WTC11 (cell line): ENCODE measurements at regions of chr20 and their contacts with region 1.

Region 1: DNA sequence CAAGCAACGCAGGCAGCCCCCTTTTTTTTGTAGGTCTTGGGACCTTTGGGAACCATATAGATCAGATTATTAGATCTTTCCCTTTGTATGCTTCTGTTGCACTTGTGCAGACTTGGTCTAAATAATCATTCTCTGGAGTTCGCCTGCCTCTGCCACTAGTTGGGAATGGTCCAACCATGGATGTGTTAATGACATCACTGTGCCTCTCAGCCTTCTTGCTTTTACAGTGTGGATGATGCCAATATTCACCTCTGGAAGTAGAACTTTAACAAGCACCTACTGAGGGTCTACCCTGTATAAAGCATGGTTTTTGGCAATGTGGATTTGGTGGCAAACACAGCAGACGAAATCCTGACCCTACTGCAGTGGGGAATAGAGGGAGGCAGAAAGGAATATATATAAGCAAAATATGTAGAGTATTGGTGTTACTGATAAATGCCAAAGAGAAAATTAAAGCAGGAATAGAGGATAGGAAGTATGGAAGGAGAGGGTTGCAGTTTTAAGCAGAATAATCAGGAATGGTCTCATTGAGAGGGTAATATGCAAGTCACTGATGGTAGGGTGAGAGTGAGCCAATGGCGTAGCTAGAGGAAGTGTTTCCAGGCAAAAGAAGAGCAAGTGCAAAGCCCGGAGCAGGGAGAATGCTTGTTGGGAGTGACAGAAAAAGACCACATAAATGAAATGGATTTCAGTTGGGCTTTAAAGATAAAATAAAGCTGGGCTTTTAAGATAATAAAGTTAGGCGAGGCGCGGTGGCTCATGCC is 97.5 kb downstream of the DOK5 start:
- DNase-seq: no peak
- ATAC-seq: no peak
- H3K4me3 Mint-ChIP-seq: no peak overlapping the region
- H3K27ac Mint-ChIP-seq: no peak overlapping the region
- H3K4me1 Mint-ChIP-seq: peaks cover 3% of the 10 kb centered on the region; the same call in 1 of the 2 replicates
- H3K27me3 Mint-ChIP-seq: no peaks in the 10 kb centered on the region
- CTCF ChIP-seq: no peak

Region 2: GRCh38 chr20:54351371-54352136 is 221.3 kb before region 1 on chr20:
- CTCF ChIA-PET with region 1: no interaction called
- POLR2A ChIA-PET with region 1: interaction called, 11 read pairs
- DNase-seq: no peak
- ATAC-seq: no peak
- H3K4me3 Mint-ChIP-seq: no peak overlapping the region
- H3K27ac Mint-ChIP-seq: no peak overlapping the region
- H3K4me1 Mint-ChIP-seq: peaks cover 12% of the 10 kb centered on the region
- H3K27me3 Mint-ChIP-seq: no peaks in the 10 kb centered on the region
- CTCF ChIP-seq: no peak

Region 3: DNA sequence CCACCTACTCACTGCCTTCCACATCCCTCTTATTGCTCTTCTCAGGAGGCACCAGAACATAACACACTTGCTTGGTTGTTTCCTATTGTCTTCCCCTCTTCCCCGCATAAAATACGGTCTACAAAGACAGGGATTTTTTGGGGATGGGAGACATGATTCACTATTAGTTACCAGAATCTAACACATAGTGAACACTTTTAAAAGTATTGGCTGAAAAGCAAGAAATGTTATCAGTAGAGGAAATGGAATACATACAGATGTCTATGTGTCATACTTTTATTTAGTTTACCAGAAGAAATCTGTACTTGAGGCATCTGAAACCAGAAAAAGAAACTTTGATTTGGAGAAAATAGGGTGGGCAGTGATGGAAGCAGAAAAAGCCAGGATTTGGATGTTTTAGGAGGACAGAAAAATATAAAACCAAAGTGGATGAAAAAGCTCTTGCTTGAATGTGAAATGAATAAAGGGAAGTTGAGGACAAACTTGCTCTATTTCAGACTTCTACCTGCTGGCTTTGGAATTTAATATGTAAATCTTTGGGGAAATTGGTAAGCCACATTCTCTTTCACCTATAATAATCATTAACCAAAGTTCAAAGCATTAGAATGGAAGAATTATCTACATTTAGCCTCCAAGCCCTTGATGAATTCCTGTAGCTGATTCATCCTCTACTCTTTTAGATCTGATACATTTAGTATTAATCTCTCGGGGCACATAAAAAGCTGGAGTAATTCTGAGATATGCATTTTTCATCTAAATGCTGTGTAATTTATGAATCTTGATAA is 14.8 kb before region 1 on chr20:
- CTCF ChIA-PET with region 1: no interaction called
- POLR2A ChIA-PET with region 1: no interaction called
- DNase-seq: no peak
- ATAC-seq: no peak
- H3K4me3 Mint-ChIP-seq: no peak overlapping the region
- H3K27ac Mint-ChIP-seq: no peak overlapping the region
- H3K4me1 Mint-ChIP-seq: peaks cover 17% of the 10 kb centered on the region
- H3K27me3 Mint-ChIP-seq: no peaks in the 10 kb centered on the region
- CTCF ChIP-seq: no peak